SK-N-SH (cell line): ENCODE measurements at regions of chr7 and their contacts with region 1.

Region 1: GRCh38 chr7:35519971-35520809 is 174.7 kb downstream of the HERPUD2 start:
- DNase-seq: peak; percentile 84
- H3K4me3 ChIP-seq: no peak overlapping the region; a peak in 1 of 4 replicates
- H3K27ac ChIP-seq: no peak overlapping the region
- H3K4me1 ChIP-seq: peaks cover 0 to 19% of the 10 kb centered on the region in 2 experiments; a peak in 2 of 4 replicates
- H3K27me3 ChIP-seq: peaks cover 10% of the 10 kb centered on the region; the same call in 1 of the 2 replicates
- CTCF ChIP-seq: peak; percentile 95
- EP300 ChIP-seq: no peak
- RAD21 ChIP-seq: peak; percentile 99

Region 2: GRCh38 chr7:35015331-35015859 is 504.8 kb before region 1 on chr7:
- CTCF ChIA-PET with region 1: no interaction called
- POLR2A ChIA-PET with region 1: no interaction called
- DNase-seq: no peak
- H3K4me3 ChIP-seq: no peak overlapping the region
- H3K27ac ChIP-seq: no peak overlapping the region
- H3K4me1 ChIP-seq: no peaks in the 10 kb centered on the region; a peak in 1 of 4 replicates
- H3K27me3 ChIP-seq: no peaks in the 10 kb centered on the region
- CTCF ChIP-seq: no peak
- EP300 ChIP-seq: no peak
- RAD21 ChIP-seq: no peak

Region 3: DNA sequence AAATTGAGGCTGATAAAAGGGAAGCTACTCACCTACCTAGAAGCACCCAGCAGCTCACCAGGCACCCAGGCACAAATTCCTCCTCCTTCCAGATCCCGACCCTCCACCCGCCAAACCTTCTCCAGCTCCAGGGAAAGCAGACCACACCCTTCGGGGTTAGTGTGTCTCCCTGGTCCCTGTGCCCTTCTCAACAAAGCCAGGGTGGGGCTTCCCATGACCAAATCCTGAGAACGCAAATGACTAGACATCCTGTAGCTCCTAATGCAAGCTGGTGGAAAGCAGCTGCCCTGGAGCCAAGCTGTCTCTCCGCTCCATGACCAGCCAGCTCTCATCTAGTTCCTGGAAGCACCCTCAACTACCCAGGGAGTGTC is 270.7 kb before region 1 on chr7:
- CTCF ChIA-PET with region 1: interaction called, 11 read pairs
- POLR2A ChIA-PET with region 1: no interaction called
- DNase-seq: no peak
- H3K4me3 ChIP-seq: no peak overlapping the region
- H3K27ac ChIP-seq: no peak overlapping the region
- H3K4me1 ChIP-seq: peaks cover 17 to 59% of the 10 kb centered on the region in 2 experiments
- H3K27me3 ChIP-seq: no peaks in the 10 kb centered on the region
- CTCF ChIP-seq: no peak
- EP300 ChIP-seq: no peak
- RAD21 ChIP-seq: no peak

Region 4: GRCh38 chr7:35380739-35381224 is 139.4 kb before region 1 on chr7:
- CTCF ChIA-PET with region 1: interaction called, 15 read pairs
- POLR2A ChIA-PET with region 1: no interaction called
- DNase-seq: no peak
- H3K4me3 ChIP-seq: no peak overlapping the region
- H3K27ac ChIP-seq: no peak overlapping the region
- H3K4me1 ChIP-seq: peaks cover 0 to 8% of the 10 kb centered on the region in 2 experiments; a peak in 1 of 4 replicates
- H3K27me3 ChIP-seq: peaks cover 6% of the 10 kb centered on the region; the same call in 1 of the 2 replicates
- CTCF ChIP-seq: no peak
- EP300 ChIP-seq: no peak
- RAD21 ChIP-seq: no peak

Region 5: GRCh38 chr7:35424869-35425495 is 95.2 kb before region 1 on chr7:
- CTCF ChIA-PET with region 1: interaction called, 294 read pairs
- POLR2A ChIA-PET with region 1: no interaction called
- DNase-seq: peak; percentile 80
- H3K4me3 ChIP-seq: no peak overlapping the region
- H3K27ac ChIP-seq: no peak overlapping the region
- H3K4me1 ChIP-seq: no peaks in the 10 kb centered on the region
- H3K27me3 ChIP-seq: no peaks in the 10 kb centered on the region
- CTCF ChIP-seq: peak; percentile 92
- EP300 ChIP-seq: no peak
- RAD21 ChIP-seq: peak; percentile 87

Region 6: DNA sequence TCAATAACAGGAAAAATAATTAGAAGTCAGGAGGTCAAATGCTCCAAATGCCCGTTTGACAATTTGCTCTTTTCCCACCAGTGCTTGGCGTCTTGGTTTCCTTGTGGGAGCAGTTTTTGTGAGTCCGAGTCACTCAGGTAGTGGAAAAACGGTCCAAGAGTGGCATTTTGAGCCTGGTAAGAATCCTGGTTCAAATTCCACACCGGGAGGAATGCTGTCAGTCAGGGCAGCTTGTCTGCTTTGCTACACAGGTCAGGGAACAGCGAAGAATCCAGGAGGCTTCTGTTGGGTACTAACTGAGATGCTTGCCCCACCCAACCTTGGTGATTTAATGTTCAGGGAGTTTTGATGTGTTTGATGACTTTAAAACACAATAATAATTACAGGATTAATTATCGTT is 34.7 kb before region 1 on chr7:
- CTCF ChIA-PET with region 1: interaction called, 22 read pairs
- POLR2A ChIA-PET with region 1: no interaction called
- DNase-seq: no peak
- H3K4me3 ChIP-seq: no peak overlapping the region
- H3K27ac ChIP-seq: no peak overlapping the region
- H3K4me1 ChIP-seq: no peaks in the 10 kb centered on the region
- H3K27me3 ChIP-seq: peaks cover 11% of the 10 kb centered on the region; the same call in 1 of the 2 replicates
- CTCF ChIP-seq: no peak
- EP300 ChIP-seq: no peak
- RAD21 ChIP-seq: no peak

Region 7: DNA sequence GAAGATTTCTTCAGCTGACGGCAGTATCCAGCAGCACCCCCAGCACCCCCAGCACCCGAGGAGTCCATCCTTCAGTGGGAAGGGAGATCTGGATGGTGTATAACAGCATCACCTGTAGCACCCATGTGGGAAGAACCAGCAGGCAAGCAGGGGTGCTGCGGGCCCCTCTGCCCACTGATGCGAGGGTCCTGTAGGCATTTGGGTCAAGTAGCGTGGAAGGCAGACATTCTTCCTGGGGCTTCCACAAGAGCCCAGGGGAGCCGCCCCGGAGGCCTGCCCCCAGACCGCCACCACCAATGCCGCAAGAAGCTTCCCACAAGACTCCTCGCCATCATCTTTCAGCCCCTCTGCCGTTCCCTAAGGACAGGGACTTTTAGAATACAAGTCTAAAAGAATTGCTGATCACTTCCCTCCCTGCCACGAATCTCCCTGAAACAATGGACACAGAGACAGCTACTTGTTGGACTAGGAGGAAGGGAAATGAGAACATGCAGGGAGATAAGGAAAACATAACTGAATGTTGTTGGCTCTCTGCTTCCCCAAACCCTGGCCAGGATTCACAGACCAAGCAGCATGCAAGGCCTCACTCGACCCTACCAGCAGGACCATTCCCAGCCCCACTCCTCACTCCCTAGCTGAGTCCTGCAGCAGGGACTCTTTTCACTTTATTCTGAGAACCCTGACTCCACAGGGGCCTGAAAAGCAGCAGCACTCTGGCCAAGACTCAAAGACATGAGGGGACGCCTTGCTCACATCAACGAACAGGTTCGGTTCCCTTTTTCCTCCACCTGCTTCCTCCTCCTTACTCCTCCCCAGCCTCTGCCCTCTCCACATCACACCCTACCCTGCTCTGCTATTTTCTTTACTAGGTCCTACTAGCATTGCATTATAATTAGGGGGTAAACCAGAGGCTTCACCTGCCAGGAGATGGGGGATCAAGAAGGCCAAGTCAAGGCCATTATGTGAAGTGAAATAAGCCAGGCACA is 10.2 kb after region 1 on chr7:
- CTCF ChIA-PET with region 1: interaction called, 32 read pairs
- POLR2A ChIA-PET with region 1: no interaction called
- DNase-seq: no peak
- H3K4me3 ChIP-seq: no peak overlapping the region
- H3K27ac ChIP-seq: no peak overlapping the region
- H3K4me1 ChIP-seq: no peaks in the 10 kb centered on the region
- H3K27me3 ChIP-seq: peaks cover 33% of the 10 kb centered on the region
- CTCF ChIP-seq: no peak
- EP300 ChIP-seq: no peak
- RAD21 ChIP-seq: no peak

Region 8: GRCh38 chr7:35565927-35566326 is 45.7 kb after region 1 on chr7:
- CTCF ChIA-PET with region 1: no interaction called
- POLR2A ChIA-PET with region 1: no interaction called
- DNase-seq: no peak
- H3K4me3 ChIP-seq: no peak overlapping the region
- H3K27ac ChIP-seq: no peak overlapping the region
- H3K4me1 ChIP-seq: no peaks in the 10 kb centered on the region
- H3K27me3 ChIP-seq: peaks cover 4% of the 10 kb centered on the region
- CTCF ChIP-seq: no peak
- EP300 ChIP-seq: no peak
- RAD21 ChIP-seq: no peak

Region 9: DNA sequence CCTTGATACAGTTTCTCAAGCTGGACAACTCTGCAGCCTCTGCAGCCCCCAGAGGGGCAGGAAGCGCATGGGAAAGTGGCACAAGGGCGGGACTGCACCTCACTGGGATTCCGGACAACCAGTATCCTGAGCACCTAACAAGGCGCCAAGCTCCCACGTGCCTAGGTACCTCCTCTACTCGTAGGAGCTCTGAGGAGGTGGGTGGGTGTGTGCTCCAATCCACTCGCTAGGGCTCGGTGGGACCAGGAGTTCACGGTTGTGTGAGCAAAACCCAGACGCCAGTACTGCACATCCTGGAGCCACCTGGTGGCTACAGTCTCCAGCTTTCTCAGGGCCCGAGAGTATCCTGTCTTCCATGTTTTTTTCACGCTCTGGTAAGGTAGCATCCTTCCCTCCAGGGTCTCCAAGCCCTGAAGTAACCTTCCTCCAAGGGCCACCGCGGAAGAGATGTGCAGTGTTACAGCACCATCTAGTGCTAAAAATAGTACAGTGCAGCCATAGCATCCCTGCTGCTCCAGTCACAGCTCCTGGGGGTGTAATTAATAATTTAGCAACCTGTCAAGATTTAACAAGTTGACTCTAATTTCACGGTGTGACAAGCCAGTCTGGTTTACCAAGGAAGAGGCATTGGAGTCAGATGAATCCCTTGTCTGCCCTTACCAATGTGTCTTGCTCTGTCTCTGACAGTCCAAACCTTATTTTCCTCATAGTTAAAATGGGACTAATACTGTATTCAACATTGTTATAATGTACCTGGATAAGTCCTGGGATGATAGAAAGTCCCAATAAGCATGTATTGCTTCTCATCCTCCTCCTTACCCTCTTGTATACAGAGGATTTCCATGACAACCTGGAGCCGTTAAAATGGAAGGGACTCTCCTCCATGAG is 104.4 kb after region 1 on chr7:
- CTCF ChIA-PET with region 1: interaction called, 28 read pairs
- POLR2A ChIA-PET with region 1: no interaction called
- DNase-seq: peak; percentile 76
- H3K4me3 ChIP-seq: no peak overlapping the region; a peak in 1 of 4 replicates
- H3K27ac ChIP-seq: no peak overlapping the region
- H3K4me1 ChIP-seq: peaks cover 0 to 4% of the 10 kb centered on the region in 2 experiments; a peak in 1 of 4 replicates
- H3K27me3 ChIP-seq: no peaks in the 10 kb centered on the region
- CTCF ChIP-seq: peak; percentile 99
- EP300 ChIP-seq: no peak
- RAD21 ChIP-seq: peak; percentile 94

Region 10: DNA sequence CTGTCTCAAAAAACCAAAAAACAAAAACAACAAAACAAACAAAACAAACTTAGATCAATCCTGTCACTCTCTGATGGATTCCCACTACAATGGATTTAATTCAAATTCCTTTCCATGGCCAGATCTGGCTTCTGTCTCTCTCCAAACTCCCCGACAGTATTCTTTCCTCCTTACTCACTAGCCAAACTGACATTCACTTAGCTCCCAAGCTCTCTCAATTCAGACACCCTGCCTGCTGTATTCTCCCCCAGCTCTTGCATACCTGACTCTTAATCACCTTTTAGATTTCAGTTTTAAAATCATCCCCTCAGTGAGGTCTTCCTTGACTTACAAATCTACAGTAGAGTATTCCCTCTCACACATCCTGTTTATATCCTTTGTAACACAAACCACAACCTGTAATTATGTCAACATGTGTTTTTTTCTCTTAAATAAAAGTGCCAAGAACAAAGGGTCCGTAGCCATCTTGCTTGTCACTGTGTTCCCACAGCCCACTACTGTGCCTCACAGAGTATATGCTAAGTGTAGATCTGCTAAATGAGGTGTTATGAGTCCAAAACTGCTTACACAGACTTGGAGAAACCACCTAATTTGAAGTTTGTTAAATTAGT is 160.3 kb after region 1 on chr7:
- CTCF ChIA-PET with region 1: no interaction called
- POLR2A ChIA-PET with region 1: no interaction called
- DNase-seq: no peak
- H3K4me3 ChIP-seq: no peak overlapping the region
- H3K27ac ChIP-seq: no peak overlapping the region
- H3K4me1 ChIP-seq: no peaks in the 10 kb centered on the region
- H3K27me3 ChIP-seq: no peaks in the 10 kb centered on the region
- CTCF ChIP-seq: no peak
- EP300 ChIP-seq: no peak
- RAD21 ChIP-seq: no peak